AG04449 (cell line): ENCODE measurements at regions of chr1 and their contacts with region 1.

Region 1: DNA sequence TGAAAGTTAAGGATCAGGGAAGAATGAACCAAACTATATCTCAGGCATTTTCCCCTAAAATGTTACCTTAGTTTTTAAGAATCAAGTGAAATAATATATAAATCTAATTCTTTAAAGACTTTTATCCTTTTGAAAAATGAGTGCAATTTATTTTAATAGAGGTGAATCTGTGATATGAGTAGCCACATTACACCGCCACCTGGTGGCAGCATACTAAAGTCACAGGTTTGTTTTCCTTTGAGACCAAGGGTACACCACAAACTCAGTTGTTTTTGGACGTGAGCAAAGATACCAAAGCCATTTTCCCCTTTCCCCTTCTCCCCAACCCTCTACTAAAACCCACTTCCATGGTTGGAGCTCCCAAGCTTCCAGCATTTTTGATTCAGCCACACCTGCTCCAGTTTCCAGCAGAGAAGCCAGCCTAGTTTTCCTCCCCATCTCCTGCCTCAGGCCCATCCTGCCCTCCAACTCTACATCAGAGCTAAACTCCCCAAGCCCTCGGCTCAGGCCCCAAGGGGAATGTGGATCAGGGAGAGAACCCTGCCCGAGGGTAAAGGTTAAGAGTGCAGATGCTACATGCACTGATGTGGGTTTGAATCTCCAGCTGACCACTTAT is 22.9 kb upstream of the LDLRAP1 start:
- DNase-seq: no peak
- H3K4me3 ChIP-seq: no peak overlapping the region
- CTCF ChIP-seq: peak; percentile 55

Region 2: DNA sequence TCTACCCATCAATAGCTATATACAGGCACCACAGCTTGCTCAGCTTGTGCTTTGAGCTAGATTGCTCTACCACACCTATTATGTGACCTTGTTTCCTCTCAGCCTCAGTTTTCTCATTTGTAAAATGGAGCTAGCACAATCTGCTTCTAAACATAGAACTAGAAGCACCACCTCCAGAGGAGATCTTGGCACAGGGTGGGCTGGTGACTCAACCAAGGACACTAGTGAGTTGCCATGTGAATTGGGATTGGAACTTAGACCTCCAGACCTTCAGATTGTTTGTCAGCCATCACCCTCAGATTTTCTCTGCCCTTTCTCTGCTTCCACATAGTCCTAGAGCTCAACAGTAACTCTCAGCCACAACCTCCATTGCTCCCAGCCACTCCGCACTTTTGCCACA is 92.9 kb before region 1 on chr1:
- CTCF ChIA-PET with region 1: interaction called, 13 read pairs
- POLR2A ChIA-PET with region 1: no interaction called
- DNase-seq: no peak
- H3K4me3 ChIP-seq: no peak overlapping the region
- CTCF ChIP-seq: no peak

Region 3: GRCh38 chr1:25451908-25452307 is 68.6 kb before region 1 on chr1:
- CTCF ChIA-PET with region 1: interaction called, 12 read pairs
- POLR2A ChIA-PET with region 1: no interaction called
- DNase-seq: no peak
- H3K4me3 ChIP-seq: no peak overlapping the region
- CTCF ChIP-seq: no peak

Region 4: DNA sequence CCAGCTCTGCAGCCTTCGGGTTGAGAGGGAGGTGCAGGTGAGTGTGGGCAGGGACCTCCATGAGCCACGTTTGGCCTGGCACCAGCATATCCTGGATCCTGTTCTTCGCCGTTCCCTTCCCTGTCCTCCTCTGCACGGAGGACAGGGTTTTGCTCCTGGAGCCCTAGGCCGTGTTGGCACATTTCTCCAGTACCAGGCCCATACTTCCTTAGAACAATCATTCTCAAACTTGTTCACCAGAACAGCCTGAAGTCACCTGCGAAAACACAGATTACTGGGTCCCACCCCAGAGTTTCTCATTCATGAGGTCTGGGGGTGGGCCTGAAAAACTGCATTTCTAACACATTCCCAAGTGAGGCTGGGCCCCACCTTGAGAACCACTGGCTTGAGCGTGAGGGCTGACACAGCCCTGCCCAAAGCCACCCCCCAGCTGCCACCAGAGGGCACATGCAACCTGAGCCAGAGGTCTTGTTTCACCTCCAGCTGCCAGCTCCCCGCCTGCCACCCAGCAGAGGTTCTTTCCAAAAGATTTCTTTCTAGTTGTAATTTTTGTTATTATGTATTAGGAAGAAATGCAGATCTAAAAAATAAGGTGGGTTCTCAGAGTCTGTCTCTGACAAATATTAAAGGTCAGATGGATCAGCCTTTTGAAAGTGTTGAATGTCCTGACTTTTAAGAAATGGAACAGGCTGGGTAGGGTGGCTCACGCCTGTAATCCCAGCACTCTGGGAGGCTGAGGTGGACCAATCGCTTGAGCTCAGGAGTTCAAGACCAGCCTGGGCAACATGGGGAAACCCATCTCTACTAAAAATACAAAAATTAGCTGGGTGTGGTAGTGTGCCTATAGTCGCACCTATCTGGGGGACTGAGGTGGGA is 16.8 kb before region 1 on chr1:
- CTCF ChIA-PET with region 1: interaction called, 73 read pairs
- POLR2A ChIA-PET with region 1: interaction called, 3 read pairs
- DNase-seq: no peak
- H3K4me3 ChIP-seq: no peak overlapping the region
- CTCF ChIP-seq: peak; percentile 33

Region 5: DNA sequence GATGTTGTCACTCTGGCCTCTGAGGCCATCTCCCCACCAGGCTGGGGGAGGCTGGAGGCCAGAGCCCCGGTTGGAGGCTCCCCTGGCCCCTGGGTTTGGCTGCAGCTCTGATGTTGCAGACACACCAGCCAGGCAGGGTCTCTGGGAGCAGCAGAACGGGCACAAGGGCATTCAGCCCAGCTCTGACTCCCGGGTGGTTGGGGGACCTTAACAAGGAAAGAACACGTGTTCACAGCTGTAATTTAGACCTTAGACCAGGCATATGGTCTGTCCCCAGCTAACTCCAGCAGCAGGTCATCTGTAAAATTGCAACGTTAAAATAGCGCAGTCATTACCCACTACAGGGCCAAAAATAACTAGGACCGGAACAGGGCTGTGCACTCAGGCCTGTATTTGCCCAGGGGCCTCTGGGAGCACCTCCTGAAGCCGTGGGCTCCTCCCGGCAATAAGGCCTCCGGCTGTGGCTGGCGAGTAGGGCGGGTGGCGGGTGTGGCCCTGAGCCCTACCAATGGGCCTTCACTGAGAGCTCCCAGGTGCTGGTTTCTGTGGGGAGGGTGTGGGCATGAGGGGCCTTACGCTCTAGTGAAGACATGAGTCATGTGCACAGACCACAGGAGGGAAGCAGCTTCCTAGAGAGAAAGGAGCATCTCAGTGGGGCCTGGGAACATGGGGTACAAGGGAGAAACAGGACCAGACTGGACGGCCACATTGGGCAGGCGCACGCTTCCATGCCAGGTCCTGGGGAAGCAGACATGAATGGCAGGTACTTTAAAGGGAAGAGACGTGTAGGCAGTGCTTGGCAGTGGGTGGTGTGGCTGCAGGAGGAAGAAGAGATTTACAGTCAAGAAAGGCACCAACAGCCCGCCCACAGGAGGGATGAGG is 29.0 kb after region 1 on chr1:
- CTCF ChIA-PET with region 1: interaction called, 14 read pairs
- POLR2A ChIA-PET with region 1: no interaction called
- DNase-seq: no peak
- H3K4me3 ChIP-seq: no peak overlapping the region
- CTCF ChIP-seq: no peak